ENCODE measurements at regions of chr12 and their contacts with region 1.

Region 1: GRCh38 chr12:93591137-93591868 is 18.8 kb downstream of the SOCS2 start:
- DNase-seq: peak; percentile 64 to 73
- ATAC-seq: peak; percentile 85

Region 2: GRCh38 chr12:93521225-93522080 is 69.8 kb before region 1 on chr12:
- intact Hi-C with region 1: no loop called
- DNase-seq: no peak
- ATAC-seq: no peak

Region 3: GRCh38 chr12:93742110-93742934 is 151.0 kb after region 1 on chr12:
- intact Hi-C with region 1: loop called in 1 of 2 experiments (anchors 5 kb)
- DNase-seq: peak; percentile 59 to 80
- ATAC-seq: peak; percentile 91

Region 4: DNA sequence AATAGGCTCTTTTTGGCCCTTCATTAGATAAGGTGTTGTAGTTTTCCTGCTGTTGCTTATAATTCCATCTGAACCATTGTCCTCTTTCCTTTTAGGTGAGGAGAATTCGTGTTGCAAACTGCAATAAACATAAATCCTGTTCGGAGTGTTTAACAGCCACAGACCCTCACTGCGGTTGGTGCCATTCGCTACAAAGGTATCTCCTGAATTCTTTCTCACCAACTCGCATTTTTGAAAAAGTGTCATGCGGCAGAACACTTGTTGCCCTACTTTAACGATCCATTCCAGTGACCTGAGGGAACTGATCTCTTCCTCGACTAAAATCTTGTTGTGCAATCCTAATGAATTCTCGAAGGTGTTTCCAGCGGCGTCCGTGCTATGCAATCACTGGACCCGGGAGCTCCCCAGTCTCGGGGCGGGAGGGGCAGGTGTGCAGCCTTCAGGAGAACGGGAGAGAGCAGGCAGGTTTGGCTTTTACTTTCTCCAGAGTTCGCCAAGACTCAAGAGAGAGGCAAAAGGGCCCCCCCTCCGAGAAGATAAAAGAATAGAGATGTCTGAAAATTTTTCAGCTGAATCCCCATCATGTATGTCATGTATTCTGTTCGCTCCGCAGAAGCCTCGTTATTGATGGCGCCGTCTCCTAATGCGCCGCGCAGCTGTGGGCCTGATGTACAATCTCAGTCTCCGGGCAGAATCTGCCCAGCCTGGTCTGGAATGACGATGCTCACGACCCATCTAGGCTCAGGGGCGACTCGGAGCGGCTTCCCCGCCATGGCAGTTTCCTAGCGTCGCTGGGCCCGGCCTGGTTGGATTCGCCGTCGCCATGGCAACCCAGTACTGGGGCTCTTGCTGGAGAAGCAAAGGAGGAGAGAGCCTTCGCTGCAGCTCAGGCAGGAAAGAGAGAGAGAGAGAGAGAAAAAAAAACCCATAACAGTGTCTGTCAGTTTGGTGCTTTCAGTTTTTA is 595.3 kb after region 1 on chr12:
- intact Hi-C with region 1: no loop called
- DNase-seq: peak in 1 of 2 donors; percentile 19
- ATAC-seq: no peak